T-cell (primary cell): ENCODE measurements at regions of chr6 and their contacts with region 1.

Region 1: GRCh38 chr6:45714741-45715507 is 300.7 kb downstream of the CLIC5 start:
- DNase-seq: peak; percentile 4 to 83 (median 40)
- ATAC-seq: peak; percentile 85 to 96 (median 90)
- H3K4me3 ChIP-seq: no peak overlapping the region
- H3K4me3 Mint-ChIP-seq: peak overlapping the region in 1 of 3 donors; percentile 29
- H3K27ac ChIP-seq: no peak overlapping the region
- H3K27ac Mint-ChIP-seq: no peak overlapping the region
- H3K4me1 ChIP-seq: peaks cover 0 to 14% of the 10 kb centered on the region in 2 experiments
- H3K4me1 Mint-ChIP-seq: peaks cover 12 to 27% (median 17%) of the 10 kb centered on the region in 3 donors
- H3K27me3 ChIP-seq: peaks cover 0 to 3% of the 10 kb centered on the region in 2 experiments
- H3K27me3 Mint-ChIP-seq: no peaks in the 10 kb centered on the region

Region 2: DNA sequence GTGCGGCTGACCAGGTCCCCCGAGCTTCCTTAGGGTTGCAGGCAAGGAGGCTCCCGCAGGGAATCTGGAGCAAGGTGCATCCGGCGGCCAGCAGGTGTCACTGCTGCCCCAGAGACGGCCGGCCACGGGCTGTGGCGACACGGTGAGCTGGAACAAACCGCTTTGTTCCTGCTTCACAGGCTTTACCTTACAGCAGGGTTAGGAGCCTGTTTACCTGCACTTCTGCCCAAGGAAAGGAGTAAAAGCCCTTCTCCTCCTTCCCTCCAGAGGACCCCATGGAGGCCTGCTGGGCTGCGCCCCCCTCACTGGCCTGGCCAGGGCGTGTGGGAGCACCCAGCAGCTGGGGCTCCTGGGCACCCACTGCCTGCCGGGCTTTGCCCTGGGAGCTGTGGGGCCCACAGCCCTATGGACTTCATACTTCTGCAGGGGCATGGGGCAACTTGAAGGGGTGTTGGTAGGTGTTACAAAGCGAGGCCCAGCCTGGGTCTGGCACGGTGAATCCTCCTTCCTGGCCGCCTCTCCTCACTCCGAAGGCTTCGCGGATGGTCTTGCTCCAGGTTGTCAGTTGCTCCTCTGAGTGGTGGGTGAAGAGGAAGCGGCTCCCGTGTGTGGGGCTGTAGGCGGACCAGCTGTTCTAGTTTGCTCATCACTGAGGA is 1239.0 kb before region 1 on chr6:
- CTCF ChIA-PET with region 1: interaction called, 8 to 22 read pairs
- POLR2A ChIA-PET with region 1: no interaction called
- DNase-seq: peak; percentile 14 to 74 (median 51)
- ATAC-seq: peak; percentile 75 to 84 (median 83)
- H3K4me3 ChIP-seq: no peak overlapping the region
- H3K4me3 Mint-ChIP-seq: no peak overlapping the region
- H3K27ac ChIP-seq: no peak overlapping the region
- H3K27ac Mint-ChIP-seq: no peak overlapping the region
- H3K4me1 ChIP-seq: peaks cover 0 to 8% of the 10 kb centered on the region in 2 experiments
- H3K4me1 Mint-ChIP-seq: peaks cover 0 to 2% (median 0%) of the 10 kb centered on the region in 3 donors
- H3K27me3 ChIP-seq: peaks cover 0 to 29% of the 10 kb centered on the region in 2 experiments
- H3K27me3 Mint-ChIP-seq: peaks cover 6 to 8% of the 10 kb centered on the region in 2 donors

Region 3: DNA sequence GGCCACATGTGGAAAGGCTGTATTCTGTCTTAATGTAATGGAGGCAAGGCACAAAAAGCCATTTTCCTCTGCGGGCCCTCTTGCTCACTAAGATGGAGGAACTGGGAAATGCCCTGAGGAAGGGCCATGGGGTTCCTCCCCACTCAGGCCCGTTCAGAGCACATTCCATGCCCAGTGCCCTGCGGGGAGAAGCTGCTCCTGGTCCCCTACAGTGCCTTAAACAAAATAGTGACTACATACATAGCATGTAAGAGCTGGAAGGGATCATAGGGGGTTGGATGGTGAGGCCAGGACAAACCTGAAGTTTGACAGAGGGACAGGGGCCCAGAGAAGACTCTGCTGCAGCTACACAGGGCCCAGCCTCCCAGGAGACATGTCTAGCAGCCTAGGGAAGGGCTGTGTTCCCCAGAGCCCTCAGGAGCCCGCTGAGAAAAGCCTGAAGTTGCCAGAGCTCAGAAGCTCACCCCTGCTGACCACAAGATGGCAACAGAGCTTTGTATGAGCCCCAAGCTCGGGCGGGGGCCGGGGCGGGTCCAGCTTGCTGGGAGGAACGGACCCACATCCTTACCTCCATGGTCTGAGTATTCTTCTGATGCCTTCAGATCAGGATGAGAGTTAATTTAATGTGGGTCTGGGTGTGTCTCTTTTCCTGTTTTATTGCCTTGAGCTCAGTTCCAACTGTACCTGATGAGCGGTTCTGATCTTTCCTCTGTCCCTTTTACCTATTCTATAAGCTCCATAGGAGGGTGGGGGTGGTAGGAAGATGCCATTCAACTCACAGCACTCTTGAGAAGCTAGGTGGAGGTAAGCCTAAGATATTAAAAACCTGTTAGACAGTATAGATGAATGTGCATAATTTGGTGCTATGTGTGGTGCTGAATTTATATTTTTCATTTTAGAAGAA is 1084.5 kb before region 1 on chr6:
- CTCF ChIA-PET with region 1: interaction called in 1 of 2 experiments, 15 read pairs
- POLR2A ChIA-PET with region 1: no interaction called
- DNase-seq: peak in 3 of 35 experiments; percentile 3 to 27 (median 5)
- ATAC-seq: peak in 2 of 4 experiments; percentile 32 to 36
- H3K4me3 ChIP-seq: no peak overlapping the region
- H3K4me3 Mint-ChIP-seq: no peak overlapping the region
- H3K27ac ChIP-seq: no peak overlapping the region
- H3K27ac Mint-ChIP-seq: no peak overlapping the region
- H3K4me1 ChIP-seq: peaks cover 4 to 10% of the 10 kb centered on the region in 2 experiments
- H3K4me1 Mint-ChIP-seq: peaks cover 7 to 9% (median 8%) of the 10 kb centered on the region in 3 donors
- H3K27me3 ChIP-seq: peaks cover 0 to 25% of the 10 kb centered on the region in 2 experiments
- H3K27me3 Mint-ChIP-seq: peaks cover 6 to 10% of the 10 kb centered on the region in 2 donors

Region 4: GRCh38 chr6:44655412-44656342 is 1059.2 kb before region 1 on chr6:
- CTCF ChIA-PET with region 1: interaction called, 20 to 87 read pairs
- POLR2A ChIA-PET with region 1: no interaction called
- DNase-seq: peak; percentile 27 to 79 (median 66)
- ATAC-seq: peak; percentile 61 to 76 (median 74)
- H3K4me3 ChIP-seq: no peak overlapping the region
- H3K4me3 Mint-ChIP-seq: peak overlapping the region; percentile 22 to 58 (median 51)
- H3K27ac ChIP-seq: no peak overlapping the region
- H3K27ac Mint-ChIP-seq: peak overlapping the region; percentile 75 to 88
- H3K4me1 ChIP-seq: peaks cover 4 to 9% of the 10 kb centered on the region in 2 experiments
- H3K4me1 Mint-ChIP-seq: peaks cover 8 to 9% (median 8%) of the 10 kb centered on the region in 3 donors
- H3K27me3 ChIP-seq: peaks cover 0 to 13% of the 10 kb centered on the region in 2 experiments
- H3K27me3 Mint-ChIP-seq: peaks cover 8% of the 10 kb centered on the region in 2 donors

Region 5: DNA sequence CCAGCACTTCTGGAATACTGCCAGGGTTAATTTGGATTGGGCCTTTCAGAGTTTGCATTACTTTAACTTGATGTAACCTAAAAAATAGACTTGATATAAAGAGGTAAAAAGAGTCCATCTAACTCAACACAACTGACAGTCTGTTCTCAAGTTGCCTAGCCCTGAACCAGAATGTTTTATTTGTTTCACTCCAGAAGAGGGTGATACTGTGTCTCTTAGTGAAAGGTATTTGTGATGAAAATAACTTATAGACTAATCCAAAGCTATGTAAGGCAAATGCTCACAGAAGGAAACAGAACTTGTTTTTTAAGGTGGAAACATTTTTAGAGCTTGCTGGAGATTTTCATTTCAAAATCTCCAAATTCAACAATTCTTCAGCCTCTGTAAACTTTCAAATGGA is 855.9 kb before region 1 on chr6:
- CTCF ChIA-PET with region 1: interaction called in 1 of 2 experiments, 10 read pairs
- POLR2A ChIA-PET with region 1: no interaction called
- DNase-seq: peak in 1 of 35 experiments; percentile 25
- ATAC-seq: peak in 1 of 4 experiments; percentile 36
- H3K4me3 ChIP-seq: no peak overlapping the region
- H3K4me3 Mint-ChIP-seq: no peak overlapping the region
- H3K27ac ChIP-seq: no peak overlapping the region
- H3K27ac Mint-ChIP-seq: no peak overlapping the region
- H3K4me1 ChIP-seq: peaks cover 2 to 15% of the 10 kb centered on the region in 2 experiments
- H3K4me1 Mint-ChIP-seq: peaks cover 38 to 50% (median 50%) of the 10 kb centered on the region in 3 donors
- H3K27me3 ChIP-seq: no peaks in the 10 kb centered on the region
- H3K27me3 Mint-ChIP-seq: no peaks in the 10 kb centered on the region

Region 6: DNA sequence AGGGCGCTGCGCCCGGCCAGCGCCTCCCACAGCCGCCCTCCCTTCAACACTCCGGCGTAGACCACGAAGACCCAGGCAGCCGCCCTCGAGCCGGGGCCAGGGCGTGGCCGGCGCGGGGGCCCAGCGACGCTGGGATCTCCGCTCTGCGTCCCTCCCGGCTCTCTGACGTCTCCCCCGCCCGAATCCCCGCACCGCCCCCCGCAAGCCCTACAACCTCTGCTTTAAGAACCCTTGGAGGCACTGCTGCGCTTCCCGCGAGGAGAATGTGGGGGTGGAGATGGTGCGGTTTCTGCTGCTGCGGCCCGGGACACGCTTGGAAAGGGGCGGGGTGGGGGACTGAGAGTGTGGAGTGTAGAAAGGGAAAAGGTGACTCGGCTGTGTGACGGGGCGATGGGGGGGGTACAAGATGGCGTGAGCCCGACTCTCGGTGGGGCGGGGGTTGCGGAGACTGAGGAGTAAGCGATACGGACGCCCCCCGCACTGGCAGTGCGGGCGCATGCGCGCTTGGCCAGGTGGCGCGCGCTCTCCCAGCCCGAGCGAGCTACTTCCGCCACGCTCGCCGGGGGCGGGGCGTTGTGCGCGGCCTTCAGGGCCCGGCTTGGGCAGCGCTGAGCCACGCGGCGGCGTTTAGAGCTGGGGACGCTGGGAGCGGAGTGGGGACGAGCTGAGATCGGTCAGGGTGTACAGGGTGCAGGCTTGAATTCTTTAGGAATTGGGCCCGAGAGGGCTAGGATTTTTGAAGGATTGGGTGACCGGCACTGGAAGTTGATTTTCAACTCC is 337.2 kb before region 1 on chr6 and contains the start of gene SUPT3H:
- CTCF ChIA-PET with region 1: interaction called in 1 of 2 experiments, 10 read pairs
- POLR2A ChIA-PET with region 1: no interaction called
- DNase-seq: peak; percentile 81 to 96 (median 88)
- ATAC-seq: peak; percentile 84 to 88 (median 87)
- H3K4me3 ChIP-seq: peak within 1 kb of the TSS; percentile 91 to 93
- H3K4me3 Mint-ChIP-seq: peak within 1 kb of the TSS; percentile 89 to 98 (median 98)
- H3K27ac ChIP-seq: peak within 1 kb of the TSS; percentile 97
- H3K27ac Mint-ChIP-seq: peak within 1 kb of the TSS; percentile 92 to 96
- H3K4me1 ChIP-seq: peaks cover 4 to 8% of the 10 kb centered on the region in 2 experiments
- H3K4me1 Mint-ChIP-seq: peaks cover 23 to 26% (median 25%) of the 10 kb centered on the region in 3 donors
- H3K27me3 ChIP-seq: no peaks in the 10 kb centered on the region
- H3K27me3 Mint-ChIP-seq: no peaks in the 10 kb centered on the region
- total RNA-seq, gene SUPT3H: 9.3 to 12.9 (median 10.7) TPM

Region 7: DNA sequence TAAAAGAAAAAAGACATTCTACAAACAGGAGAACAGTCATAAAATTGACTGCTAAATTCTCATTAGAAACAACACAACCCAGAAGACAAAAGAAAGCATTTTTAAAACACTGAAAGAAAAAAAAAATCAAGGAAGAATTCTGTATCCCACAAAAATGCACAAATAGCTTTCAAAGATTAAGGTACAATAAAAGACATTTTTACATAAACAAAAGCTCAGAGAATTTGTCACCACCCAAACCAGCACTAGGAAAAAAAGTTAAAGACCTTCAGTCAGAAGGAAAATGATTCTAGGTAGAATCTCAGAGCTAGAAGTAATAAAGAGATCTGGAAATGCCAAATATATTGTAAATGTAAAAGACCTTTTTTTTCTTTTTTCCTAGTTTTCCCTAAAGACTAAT is 48.4 kb after region 1 on chr6:
- CTCF ChIA-PET with region 1: no interaction called
- POLR2A ChIA-PET with region 1: interaction called in 1 of 2 experiments, 14 read pairs
- DNase-seq: no peak
- ATAC-seq: no peak
- H3K4me3 ChIP-seq: no peak overlapping the region
- H3K4me3 Mint-ChIP-seq: no peak overlapping the region
- H3K27ac ChIP-seq: no peak overlapping the region
- H3K27ac Mint-ChIP-seq: no peak overlapping the region
- H3K4me1 ChIP-seq: no peaks in the 10 kb centered on the region
- H3K4me1 Mint-ChIP-seq: no peaks in the 10 kb centered on the region
- H3K27me3 ChIP-seq: no peaks in the 10 kb centered on the region
- H3K27me3 Mint-ChIP-seq: peaks cover 7 to 9% of the 10 kb centered on the region in 2 donors